ENCODE measurements at regions of chr11 and their contacts with region 1.

Region 1: GRCh38 chr11:17230867-17231851 is 23.4 kb upstream of the PIK3C2A start:
- DNase-seq: peak; percentile 80
- ATAC-seq: peak; percentile 94
- H3K4me3 Mint-ChIP-seq: no peak overlapping the region
- H3K27ac Mint-ChIP-seq: no peak overlapping the region
- H3K4me1 Mint-ChIP-seq: peaks cover 20% of the 10 kb centered on the region
- H3K27me3 Mint-ChIP-seq: peaks cover 3% of the 10 kb centered on the region
- CTCF ChIP-seq: no peak

Region 2: DNA sequence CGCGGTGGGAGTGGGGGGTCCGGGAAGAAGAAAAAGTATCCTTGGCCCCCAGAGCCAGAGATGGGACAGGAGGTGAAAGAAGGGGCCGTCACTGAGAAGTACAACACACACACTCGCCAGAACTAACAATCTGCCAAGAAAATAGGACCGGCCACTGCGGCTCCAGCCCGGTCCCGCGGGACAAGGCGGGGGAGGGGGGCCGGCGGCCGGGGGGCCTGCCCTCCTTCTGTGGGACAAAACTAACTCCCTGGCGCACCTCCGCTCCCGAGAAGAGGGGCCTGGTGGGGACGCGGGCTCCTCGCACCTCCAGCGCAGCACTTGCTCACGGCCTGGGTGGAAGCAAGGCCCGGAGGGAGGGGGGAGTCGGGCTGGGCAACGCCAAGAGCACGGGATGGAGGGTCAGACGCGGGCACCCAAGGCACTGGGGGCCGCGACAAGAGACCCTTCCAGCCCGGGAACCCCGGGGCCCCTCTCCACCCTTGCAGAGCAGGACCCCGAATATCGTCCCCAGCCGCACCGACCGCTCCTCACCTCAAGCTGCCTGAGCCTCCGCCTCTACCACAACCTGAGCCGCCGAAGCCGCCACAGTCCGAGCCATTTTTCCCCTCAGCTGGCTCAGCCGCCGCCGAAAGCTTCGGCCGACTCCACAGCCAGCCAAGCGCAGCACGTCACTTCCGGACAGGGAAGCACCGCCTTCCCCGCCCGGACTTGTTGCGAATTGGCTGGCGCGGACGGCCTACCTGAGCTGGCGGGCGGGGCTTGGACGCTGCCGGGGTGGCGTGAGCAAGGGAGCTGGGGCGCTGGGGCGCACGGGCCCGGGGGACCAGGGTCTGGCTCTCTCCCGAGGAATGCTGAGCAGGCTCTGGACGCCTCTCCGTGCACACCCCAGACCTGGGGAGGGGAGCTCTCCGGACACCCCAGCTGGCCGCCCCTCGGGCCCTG is 23.6 kb before region 1 on chr11 and contains the start of gene PIK3C2A:
- CTCF ChIA-PET with region 1: interaction called, 26 read pairs
- POLR2A ChIA-PET with region 1: interaction called, 3 read pairs
- intact Hi-C with region 1: no loop called
- DNase-seq: peak; percentile 98
- ATAC-seq: peak; percentile 97
- H3K4me3 Mint-ChIP-seq: peak within 1 kb of the TSS; percentile 82
- H3K27ac Mint-ChIP-seq: peak within 1 kb of the TSS; percentile 98
- H3K4me1 Mint-ChIP-seq: peaks cover 43% of the 10 kb centered on the region
- H3K27me3 Mint-ChIP-seq: no peaks in the 10 kb centered on the region
- CTCF ChIP-seq: no peak
- total RNA-seq, gene PIK3C2A: 24.1 to 29.3 TPM

Region 3: DNA sequence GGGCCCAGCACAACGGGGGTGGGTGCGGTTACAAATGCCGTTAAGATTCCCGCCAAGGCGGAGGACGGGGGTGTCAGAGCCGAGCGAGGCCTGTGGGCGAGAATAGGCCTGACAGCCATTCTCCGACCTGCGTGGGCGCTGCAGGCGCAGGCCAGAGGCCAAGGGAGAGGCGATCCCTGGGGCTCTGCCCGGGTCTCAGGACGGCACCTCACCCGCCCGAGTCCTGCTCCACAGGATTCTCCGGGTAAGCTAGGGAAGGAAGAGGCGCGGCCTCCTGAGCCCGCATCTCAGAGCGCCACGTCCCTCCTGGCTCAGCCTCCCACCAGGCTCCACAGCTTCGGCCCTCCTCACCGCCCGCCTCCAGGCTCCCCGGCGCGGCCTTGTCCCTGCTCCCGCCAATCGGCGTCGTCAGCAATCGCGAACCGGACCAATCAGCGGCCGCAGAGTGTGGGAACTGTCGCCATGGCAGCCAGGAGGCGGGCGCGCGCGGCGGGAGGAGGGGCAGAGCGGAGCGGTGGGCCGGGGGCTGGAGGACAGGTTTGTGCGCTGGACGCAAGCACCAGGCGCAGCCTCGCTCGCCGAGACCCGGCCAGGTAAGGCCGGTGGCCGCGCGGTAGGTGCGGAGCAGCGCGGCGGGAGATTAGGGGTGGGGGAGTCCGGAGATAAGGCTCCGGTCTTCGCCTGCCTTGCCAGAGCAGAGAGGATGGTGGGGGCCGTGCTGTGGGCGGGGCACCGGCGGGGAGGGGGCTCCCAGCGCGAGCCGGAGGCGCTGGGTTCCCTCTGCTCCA is 45.3 kb after region 1 on chr11 and contains the start of gene NUCB2:
- CTCF ChIA-PET with region 1: interaction called, 21 read pairs
- POLR2A ChIA-PET with region 1: no interaction called
- intact Hi-C with region 1: loop called (anchors 2 kb)
- DNase-seq: peak; percentile 97
- ATAC-seq: peak; percentile 88
- H3K4me3 Mint-ChIP-seq: peak within 1 kb of the TSS; percentile 82
- H3K27ac Mint-ChIP-seq: peak within 1 kb of the TSS; percentile 91
- H3K4me1 Mint-ChIP-seq: peaks cover 36% of the 10 kb centered on the region
- H3K27me3 Mint-ChIP-seq: no peaks in the 10 kb centered on the region
- CTCF ChIP-seq: no peak
- total RNA-seq, gene NUCB2: 81.9 to 86.0 TPM

Region 4: DNA sequence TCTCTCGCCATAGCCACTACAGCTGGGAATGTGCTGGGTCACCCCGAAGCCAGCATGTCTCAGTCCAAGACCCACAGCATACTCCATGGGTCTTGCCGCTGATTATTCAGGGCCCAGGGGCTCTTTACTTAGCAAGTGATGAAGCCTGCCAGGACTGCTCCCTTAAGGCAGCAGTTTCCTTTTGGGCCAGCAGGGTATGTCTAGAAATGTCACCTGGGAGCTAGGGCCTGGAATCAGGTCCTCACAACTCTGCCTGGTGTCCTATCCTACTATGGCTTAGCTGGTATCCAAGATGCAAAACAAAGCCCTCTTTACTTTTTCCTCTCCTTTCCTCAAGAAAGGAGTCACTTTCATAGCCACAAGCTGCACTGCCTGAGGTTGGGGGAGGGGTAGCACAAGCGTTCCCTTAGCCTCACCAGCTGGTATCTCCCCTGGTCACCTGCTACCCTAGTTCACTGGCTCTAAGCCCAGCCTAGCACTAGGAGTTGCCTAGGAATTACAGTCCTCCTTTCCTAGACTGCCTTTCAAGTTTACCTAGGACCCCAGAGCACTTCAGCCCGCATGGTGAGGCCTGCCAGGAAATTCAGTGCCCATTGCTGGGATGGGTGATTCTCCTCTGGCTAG is 97.8 kb after region 1 on chr11:
- CTCF ChIA-PET with region 1: interaction called, 10 read pairs
- POLR2A ChIA-PET with region 1: no interaction called
- intact Hi-C with region 1: no loop called
- DNase-seq: no peak
- ATAC-seq: no peak
- H3K4me3 Mint-ChIP-seq: no peak overlapping the region
- H3K27ac Mint-ChIP-seq: no peak overlapping the region
- H3K4me1 Mint-ChIP-seq: peaks cover 22% of the 10 kb centered on the region
- H3K27me3 Mint-ChIP-seq: no peaks in the 10 kb centered on the region
- CTCF ChIP-seq: no peak

Region 5: DNA sequence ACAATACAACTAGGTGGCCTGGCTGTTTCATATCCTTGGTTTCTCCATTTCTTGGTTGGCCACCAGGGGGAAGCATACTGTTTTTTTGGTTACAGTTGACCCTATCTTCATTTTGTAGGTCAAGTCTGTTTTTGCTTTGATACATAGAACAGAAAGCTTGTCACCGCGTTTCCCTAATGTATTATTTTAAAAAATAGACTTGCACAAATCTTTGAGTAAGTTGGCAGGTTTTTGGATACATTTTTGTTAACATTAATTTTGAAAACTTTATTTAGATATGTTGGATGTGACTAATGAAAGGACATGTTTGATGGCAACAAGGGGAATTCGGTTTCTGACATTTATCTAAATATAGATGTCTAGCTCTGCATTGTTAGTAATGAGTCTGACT is 123.4 kb after region 1 on chr11:
- CTCF ChIA-PET with region 1: interaction called, 20 read pairs
- POLR2A ChIA-PET with region 1: interaction called, 4 read pairs
- intact Hi-C with region 1: loop called (anchors 5 kb)
- DNase-seq: peak; percentile 87
- ATAC-seq: peak; percentile 45
- H3K4me3 Mint-ChIP-seq: peak overlapping the region; percentile 87
- H3K27ac Mint-ChIP-seq: peak overlapping the region; percentile 34
- H3K4me1 Mint-ChIP-seq: peaks cover 34% of the 10 kb centered on the region
- H3K27me3 Mint-ChIP-seq: no peaks in the 10 kb centered on the region
- CTCF ChIP-seq: peak; percentile 80

Region 6: DNA sequence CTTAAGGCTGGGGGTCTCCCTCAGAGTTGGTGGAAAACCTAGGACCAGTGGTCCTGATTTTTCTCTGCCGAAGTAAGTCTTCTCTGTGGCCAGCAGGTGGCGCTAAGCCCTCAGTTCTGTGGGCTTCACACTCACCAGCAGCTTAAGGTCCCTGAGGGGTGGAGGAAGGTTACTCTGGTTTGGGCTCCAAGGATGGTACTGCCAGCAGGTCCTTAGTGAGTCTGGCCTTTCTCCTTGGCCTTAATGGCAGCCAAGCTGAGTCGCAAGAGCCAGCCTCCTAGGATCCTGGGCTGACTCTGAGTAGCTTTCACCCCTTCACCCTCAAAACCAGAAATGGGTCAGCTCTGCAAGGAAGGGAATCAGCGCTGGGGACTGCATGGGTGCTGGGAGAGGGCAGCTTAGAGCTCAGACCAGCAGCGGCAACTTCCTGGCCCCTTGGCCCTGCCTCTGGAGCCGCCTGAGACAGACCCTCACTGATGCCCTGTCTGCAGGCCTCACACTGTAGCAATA is 152.9 kb after region 1 on chr11:
- CTCF ChIA-PET with region 1: interaction called, 24 read pairs
- POLR2A ChIA-PET with region 1: no interaction called
- intact Hi-C with region 1: no loop called
- DNase-seq: peak; percentile 87
- ATAC-seq: peak; percentile 76
- H3K4me3 Mint-ChIP-seq: no peak overlapping the region
- H3K27ac Mint-ChIP-seq: no peak overlapping the region
- H3K4me1 Mint-ChIP-seq: peaks cover 2% of the 10 kb centered on the region
- H3K27me3 Mint-ChIP-seq: no peaks in the 10 kb centered on the region
- CTCF ChIP-seq: peak; percentile 90

Region 7: DNA sequence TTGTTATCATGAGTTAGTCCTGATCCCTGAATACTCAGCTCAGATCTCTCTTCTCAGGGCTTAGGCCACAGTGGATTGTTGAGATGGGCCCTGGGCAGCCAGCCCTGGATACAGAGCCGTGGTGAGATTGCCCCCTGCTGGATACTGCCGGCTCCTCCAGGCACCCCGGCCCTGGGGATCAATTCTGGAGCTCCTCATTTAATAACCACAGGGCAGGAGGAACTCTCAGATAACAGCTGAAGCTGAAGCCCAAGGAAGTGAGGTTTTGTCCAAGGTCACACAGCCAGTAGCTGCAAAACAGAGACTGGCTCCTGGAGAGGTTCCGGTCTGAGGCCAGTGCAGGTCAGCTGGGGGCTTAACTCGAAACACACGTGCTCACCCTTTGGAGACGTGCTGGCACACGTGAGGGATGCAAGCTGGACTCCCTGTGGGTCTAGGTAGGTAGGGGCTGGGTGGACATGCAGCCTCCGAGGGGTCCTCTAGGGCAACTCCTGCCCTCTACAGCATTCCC is 297.1 kb after region 1 on chr11:
- CTCF ChIA-PET with region 1: interaction called, 12 read pairs
- POLR2A ChIA-PET with region 1: no interaction called
- intact Hi-C with region 1: no loop called
- DNase-seq: peak; percentile 70
- ATAC-seq: peak; percentile 92
- H3K4me3 Mint-ChIP-seq: no peak overlapping the region
- H3K27ac Mint-ChIP-seq: no peak overlapping the region
- H3K4me1 Mint-ChIP-seq: no peaks in the 10 kb centered on the region
- H3K27me3 Mint-ChIP-seq: peaks cover 7% of the 10 kb centered on the region
- CTCF ChIP-seq: peak; percentile 72

Measured in activated CD8-positive, alpha-beta T cell treated with anti-CD3 and anti-CD28 coated beads for 36 hours (primary cell).